AG04449 (cell line): ENCODE measurements at regions of chr1 and their contacts with region 1.

Region 1: GRCh38 chr1:19661721-19662228 is 2.9 kb upstream of the HTR6 start:
- DNase-seq: no peak
- H3K4me3 ChIP-seq: no peak overlapping the region
- CTCF ChIP-seq: peak; percentile 34

Region 2: DNA sequence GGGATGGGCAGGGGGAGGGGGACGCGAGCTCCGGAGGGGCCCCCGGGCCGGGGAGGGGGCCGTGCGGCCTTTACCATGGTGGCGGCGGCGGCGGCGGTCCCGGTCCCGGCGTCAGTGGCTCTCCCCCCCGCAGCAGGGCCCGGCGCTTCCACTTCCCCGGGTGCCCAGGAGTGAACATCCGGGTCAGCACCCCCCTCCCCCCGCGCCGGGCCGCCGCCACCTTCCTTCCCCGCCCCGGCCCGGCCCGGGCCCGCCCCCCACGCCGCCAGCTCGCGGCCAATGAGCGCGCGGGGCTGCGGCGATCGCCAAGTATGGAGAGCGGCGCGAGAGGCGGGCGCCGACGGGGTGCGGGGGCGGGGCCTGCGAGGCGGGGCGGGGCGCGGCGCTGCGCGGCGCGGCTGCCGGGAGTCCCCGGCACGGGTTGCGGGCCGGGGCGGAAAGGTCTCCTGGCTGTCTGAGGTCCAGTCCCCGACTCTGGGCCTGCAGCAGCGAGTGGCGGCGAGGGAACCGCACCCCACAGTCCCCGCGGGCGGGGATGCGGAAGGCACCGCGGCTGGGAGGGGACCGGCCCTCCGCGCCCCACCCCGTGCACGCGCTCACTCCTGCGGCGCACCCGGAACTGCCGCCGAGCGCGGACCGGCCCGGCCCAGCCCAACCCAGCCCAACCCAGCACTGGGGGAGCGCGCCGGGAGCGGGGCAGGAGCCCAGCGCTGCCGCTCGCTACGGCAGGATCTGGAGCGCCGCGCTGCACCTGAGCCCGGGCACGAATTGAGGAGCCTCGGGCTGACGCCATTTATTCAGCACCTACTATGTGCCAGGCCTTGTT is 176.2 kb before region 1 on chr1 and contains the start of gene CAPZB:
- CTCF ChIA-PET with region 1: interaction called, 10 read pairs
- POLR2A ChIA-PET with region 1: no interaction called
- DNase-seq: no peak
- H3K4me3 ChIP-seq: peak within 1 kb of the TSS; percentile 84
- CTCF ChIP-seq: no peak

Region 3: GRCh38 chr1:19676438-19676922 is 14.7 kb after region 1 on chr1:
- CTCF ChIA-PET with region 1: interaction called, 103 read pairs
- POLR2A ChIA-PET with region 1: no interaction called
- DNase-seq: no peak
- H3K4me3 ChIP-seq: no peak overlapping the region
- CTCF ChIP-seq: no peak

Region 4: DNA sequence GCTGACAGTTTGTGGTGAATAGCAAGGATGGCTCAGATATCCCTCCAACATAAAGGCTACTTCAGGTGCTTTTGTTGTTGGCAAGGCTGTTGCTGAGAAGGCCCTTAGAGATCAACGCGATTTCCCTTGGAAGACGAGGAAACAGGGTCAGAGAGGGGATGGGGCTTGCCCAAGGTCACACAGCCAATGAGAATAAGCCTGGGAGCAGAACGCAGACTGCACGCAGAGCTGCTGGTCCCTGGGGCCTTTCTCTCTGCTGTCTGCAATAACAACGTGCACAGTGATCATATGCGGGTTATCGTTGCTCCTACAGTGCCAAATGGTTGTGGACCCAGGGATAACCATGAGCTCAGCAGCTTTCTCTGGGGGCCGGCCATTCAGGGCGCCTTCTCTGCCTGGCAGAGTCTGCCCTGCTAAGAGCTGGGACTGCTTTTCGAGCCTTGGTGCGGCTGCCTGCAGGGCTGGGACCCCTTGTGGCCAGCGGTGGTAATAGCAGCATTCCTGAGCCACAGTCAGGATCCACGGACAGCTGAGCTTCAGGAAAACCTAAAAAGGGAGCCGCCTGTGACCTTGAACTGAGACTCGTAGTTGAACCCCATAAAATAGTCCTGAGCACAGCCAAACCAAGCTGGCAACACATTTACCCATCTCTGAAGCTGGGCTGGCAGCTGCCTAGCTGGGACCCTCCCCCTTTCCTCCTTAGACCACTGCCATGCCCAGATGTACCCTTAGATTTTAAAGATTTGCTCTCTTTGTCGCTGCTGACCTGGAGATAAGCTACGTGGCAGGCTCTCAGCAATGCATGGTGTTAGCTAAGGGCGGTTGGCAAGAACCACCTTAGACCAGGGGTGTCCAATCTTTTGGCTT is 42.7 kb after region 1 on chr1:
- CTCF ChIA-PET with region 1: interaction called, 252 read pairs
- POLR2A ChIA-PET with region 1: no interaction called
- DNase-seq: no peak
- H3K4me3 ChIP-seq: no peak overlapping the region
- CTCF ChIP-seq: peak; percentile 96

Region 5: GRCh38 chr1:19811206-19811851 is 149.6 kb after region 1 on chr1:
- CTCF ChIA-PET with region 1: interaction called, 36 read pairs
- POLR2A ChIA-PET with region 1: no interaction called
- DNase-seq: no peak
- H3K4me3 ChIP-seq: no peak overlapping the region
- CTCF ChIP-seq: peak; percentile 67

Region 6: GRCh38 chr1:19825298-19825697 is 163.5 kb after region 1 on chr1:
- CTCF ChIA-PET with region 1: no interaction called
- POLR2A ChIA-PET with region 1: no interaction called
- DNase-seq: no peak
- H3K4me3 ChIP-seq: no peak overlapping the region
- CTCF ChIP-seq: no peak